Activated naive CD4-positive, alpha-beta T cell treated with anti-CD3 and anti-CD28 coated beads for 36 hours (primary cell): ENCODE measurements at regions of chr17 and their contacts with region 1.

Region 1: DNA sequence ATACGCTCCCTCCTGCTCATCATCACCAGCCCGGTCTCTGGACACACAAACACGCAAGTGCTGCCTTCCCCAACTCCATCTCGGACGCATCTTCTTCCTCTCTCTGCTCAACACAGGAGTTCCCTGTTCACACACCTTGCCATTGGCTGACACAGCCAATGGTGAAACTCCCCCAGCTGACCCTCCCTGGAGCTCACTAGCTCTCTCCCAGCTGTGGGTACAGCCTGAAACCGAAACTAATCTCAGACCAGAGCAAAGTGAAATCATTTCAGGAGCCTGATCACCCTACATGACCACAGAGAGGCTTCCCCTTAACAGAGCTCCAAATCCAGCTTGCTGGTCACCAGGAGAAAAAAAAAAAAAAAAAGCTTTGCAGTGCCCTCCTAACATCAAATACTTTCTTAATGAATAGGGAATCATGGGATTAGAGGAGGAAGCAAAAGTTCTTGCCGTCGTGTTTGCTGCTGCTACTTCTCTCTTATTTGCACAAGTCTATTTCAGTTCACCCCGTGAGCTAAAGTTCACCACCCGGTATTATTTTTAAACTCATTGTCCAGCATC is 8.3 kb downstream of the CUEDC1 start:
- DNase-seq: peak; percentile 31
- H3K4me3 Mint-ChIP-seq: peak overlapping the region; percentile 20
- H3K27ac Mint-ChIP-seq: no peak overlapping the region
- H3K4me1 Mint-ChIP-seq: peaks cover 34% of the 10 kb centered on the region
- H3K27me3 Mint-ChIP-seq: no peaks in the 10 kb centered on the region

Region 2: DNA sequence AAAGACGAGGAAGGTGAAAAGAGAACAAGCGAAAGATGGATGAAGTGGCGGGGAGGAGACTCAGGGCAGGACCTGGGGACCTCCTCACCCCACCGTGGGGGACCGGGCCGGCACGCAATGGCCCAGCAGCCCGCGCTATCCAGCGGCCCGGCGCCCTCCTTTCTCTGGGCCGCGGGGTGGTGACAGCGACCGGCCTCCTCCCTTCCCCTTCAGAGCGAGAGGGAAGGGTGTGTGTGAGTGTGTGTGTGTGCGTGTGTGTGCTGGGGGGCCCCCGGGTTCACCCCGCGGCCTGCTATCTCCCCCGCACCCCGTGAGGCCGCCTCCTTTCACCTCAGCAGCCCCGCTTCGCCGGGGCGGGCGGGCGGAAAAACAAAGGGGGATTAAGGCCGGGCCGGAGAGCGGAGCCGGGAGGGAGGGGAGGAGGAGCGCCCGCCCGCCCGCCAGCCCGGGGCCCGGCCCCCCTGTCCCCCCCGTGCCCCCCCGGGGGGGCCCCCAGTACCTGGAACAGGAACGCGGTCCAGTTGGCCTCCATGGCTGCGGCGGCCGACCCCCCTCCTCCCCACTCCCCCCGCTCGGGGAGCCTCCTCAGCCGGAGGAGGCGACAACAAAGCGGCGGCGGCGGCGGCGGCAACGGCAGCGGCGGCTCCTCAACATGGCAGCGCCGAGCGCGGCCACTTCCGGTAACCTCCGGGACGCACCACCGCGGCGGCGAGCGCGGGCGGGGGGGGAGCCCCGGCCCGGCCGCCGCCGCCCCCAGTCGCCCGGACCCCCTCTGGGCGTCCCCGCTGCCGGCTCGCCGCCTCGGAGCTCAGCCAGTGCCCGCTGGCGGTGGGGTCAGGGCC is 40.9 kb after region 1 on chr17 and contains the start of gene VEZF1:
- CTCF ChIA-PET with region 1: interaction called, 4 read pairs
- intact Hi-C with region 1: loop called (anchors 2 kb)
- DNase-seq: peak; percentile 75
- H3K4me3 Mint-ChIP-seq: peak within 1 kb of the TSS; percentile 90
- H3K27ac Mint-ChIP-seq: peak within 1 kb of the TSS; percentile 89
- H3K4me1 Mint-ChIP-seq: peaks cover 57% of the 10 kb centered on the region
- H3K27me3 Mint-ChIP-seq: no peaks in the 10 kb centered on the region
- total RNA-seq, gene VEZF1: 21.7 to 22.0 TPM

Region 3: DNA sequence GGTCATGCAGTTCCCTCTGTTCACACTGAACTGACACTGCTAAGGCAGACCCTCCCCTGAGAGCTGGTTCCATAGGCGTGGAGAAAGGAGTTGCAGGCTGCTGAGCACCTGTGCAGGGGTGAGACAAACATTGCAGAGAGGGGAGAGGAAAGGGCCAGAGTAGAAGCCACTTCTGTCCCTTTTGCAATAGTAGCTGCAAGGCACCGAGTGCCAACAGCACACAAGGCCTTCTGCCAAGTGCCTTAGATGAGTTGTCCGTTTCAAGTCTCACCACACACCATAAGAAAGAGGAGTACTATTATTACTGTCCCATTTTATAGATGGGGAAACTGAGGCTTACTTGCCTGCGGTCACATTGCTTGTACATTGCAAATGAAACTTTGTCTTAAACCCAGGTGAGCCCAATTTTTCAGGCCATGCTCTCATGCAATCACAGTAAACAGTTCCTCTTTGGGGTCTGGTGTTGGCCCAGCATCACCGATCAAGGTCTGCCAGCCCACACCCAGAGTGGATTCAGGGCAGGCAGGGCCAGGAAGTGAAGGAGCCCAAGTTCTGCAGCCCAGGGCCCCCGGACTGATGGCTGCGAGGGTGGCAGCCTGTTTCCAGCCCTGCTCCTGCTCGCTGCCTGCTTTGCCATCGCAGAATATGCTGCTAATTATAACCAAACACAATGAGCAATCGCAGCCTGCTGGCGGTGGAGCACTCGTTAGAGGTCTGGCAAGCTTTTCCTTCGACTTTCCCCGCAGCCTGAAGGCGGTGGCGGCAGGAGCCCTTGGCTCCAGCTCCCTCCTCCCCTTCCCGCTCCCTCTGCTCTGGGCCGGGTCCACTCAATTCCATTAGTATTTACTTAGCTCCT is 99.6 kb after region 1 on chr17:
- CTCF ChIA-PET with region 1: no interaction called
- intact Hi-C with region 1: no loop called
- DNase-seq: no peak
- H3K4me3 Mint-ChIP-seq: no peak overlapping the region
- H3K27ac Mint-ChIP-seq: no peak overlapping the region
- H3K4me1 Mint-ChIP-seq: no peaks in the 10 kb centered on the region
- H3K27me3 Mint-ChIP-seq: peaks cover 5% of the 10 kb centered on the region

Region 4: DNA sequence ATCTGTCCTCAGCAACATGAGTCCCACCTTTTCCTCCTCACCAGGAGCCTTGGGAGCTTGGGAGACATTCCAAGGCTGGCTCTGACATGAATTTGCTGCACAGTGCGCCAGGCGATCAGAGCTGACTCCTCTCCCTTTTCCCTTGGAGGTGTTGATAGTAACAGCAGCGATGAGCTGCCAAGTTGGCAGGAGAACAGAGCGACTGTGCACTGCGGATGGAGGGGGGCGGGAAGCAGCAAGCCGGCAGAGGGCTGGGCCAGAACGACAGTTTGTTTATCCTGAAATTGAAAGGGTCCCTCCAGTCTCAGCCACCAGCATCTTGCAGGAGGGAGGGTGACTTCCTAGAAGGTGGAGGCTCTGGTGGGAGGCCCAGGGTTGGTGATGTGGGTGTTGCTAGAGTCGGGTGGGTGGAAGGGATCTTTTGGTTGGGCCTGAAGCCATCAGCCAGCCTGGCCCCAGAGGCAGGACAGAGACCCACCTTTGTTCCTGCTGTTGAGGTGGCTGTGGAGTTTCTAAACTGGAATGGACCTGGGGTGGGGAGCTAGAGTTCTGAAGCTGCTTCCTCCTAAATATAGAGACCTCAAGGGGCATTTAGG is 113.8 kb after region 1 on chr17:
- CTCF ChIA-PET with region 1: no interaction called
- intact Hi-C with region 1: no loop called
- DNase-seq: peak; percentile 7
- H3K4me3 Mint-ChIP-seq: no peak overlapping the region
- H3K27ac Mint-ChIP-seq: no peak overlapping the region
- H3K4me1 Mint-ChIP-seq: no peaks in the 10 kb centered on the region
- H3K27me3 Mint-ChIP-seq: no peaks in the 10 kb centered on the region

Region 5: GRCh38 chr17:58079300-58080097 is 132.6 kb after region 1 on chr17:
- CTCF ChIA-PET with region 1: no interaction called
- intact Hi-C with region 1: no loop called
- DNase-seq: no peak
- H3K4me3 Mint-ChIP-seq: no peak overlapping the region
- H3K27ac Mint-ChIP-seq: no peak overlapping the region
- H3K4me1 Mint-ChIP-seq: peaks cover 4% of the 10 kb centered on the region
- H3K27me3 Mint-ChIP-seq: no peaks in the 10 kb centered on the region